Mammary epithelial cell (primary cell): ENCODE measurements at regions of chr12 and their contacts with region 1.

Region 1: DNA sequence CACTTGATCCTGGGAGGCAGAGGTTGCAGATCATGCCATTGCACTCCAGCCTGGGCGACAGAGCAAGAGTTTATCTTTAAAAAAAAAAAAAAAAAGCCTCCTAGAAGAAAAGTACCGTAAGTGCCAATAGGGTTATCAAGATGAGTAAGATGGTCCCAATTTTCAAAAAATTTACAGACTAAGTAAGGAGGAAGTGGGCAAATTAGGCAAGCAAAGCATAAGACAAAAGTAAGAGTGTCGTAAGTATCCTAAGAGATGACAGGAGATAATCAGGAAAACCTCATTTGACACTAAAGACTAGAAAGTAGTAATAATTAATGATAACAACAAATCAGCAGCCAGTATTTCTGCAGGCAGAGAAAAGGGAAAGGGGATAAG is 12.2 kb downstream of the PYM1 start:
- DNase-seq: no peak
- H3K4me3 ChIP-seq: no peak overlapping the region
- H3K27ac ChIP-seq: no peak overlapping the region
- H3K4me1 ChIP-seq: peaks cover 19% of the 10 kb centered on the region
- H3K27me3 ChIP-seq: no peaks in the 10 kb centered on the region
- CTCF ChIP-seq: no peak

Region 2: GRCh38 chr12:55875704-55876467 is 39.6 kb before region 1 on chr12:
- CTCF ChIA-PET with region 1: no interaction called
- dilution Hi-C with region 1: loop called (anchors 5 kb)
- in situ Hi-C with region 1: no loop called
- intact Hi-C with region 1: no loop called
- DNase-seq: no peak
- H3K4me3 ChIP-seq: no peak overlapping the region
- H3K27ac ChIP-seq: no peak overlapping the region
- H3K4me1 ChIP-seq: peaks cover 2% of the 10 kb centered on the region
- H3K27me3 ChIP-seq: no peaks in the 10 kb centered on the region
- CTCF ChIP-seq: no peak

Region 3: GRCh38 chr12:55955800-55956508 is 40.5 kb after region 1 on chr12:
- CTCF ChIA-PET with region 1: no interaction called
- dilution Hi-C with region 1: no loop called
- in situ Hi-C with region 1: no loop called
- intact Hi-C with region 1: no loop called
- DNase-seq: peak; percentile 88
- H3K4me3 ChIP-seq: no peak overlapping the region
- H3K27ac ChIP-seq: no peak overlapping the region
- H3K4me1 ChIP-seq: peaks cover 24% of the 10 kb centered on the region
- H3K27me3 ChIP-seq: no peaks in the 10 kb centered on the region
- CTCF ChIP-seq: peak; percentile 84 to 88